Activated CD4-positive, alpha-beta memory T cell treated with anti-CD3 and anti-CD28 coated beads, Interleukin-2, amount 10 ng/mL, durations not matched to agents 7 days and 5 days (primary cell): ENCODE measurements at regions of chr17 and their contacts with region 1.

Region 1: GRCh38 chr17:48678141-48678971 is 44.0 kb downstream of the PRAC1 start:
- DNase-seq: peak; percentile 71
- H3K4me3 Mint-ChIP-seq: no peak overlapping the region
- H3K27ac Mint-ChIP-seq: no peak overlapping the region
- H3K4me1 Mint-ChIP-seq: no peaks in the 10 kb centered on the region
- H3K27me3 Mint-ChIP-seq: peaks cover 53% of the 10 kb centered on the region

Region 2: GRCh38 chr17:48663134-48663924 is 15.0 kb before region 1 on chr17:
- CTCF ChIA-PET with region 1: interaction called, 19 read pairs
- POLR2A ChIA-PET with region 1: no interaction called
- DNase-seq: no peak
- H3K4me3 Mint-ChIP-seq: no peak overlapping the region
- H3K27ac Mint-ChIP-seq: no peak overlapping the region
- H3K4me1 Mint-ChIP-seq: no peaks in the 10 kb centered on the region
- H3K27me3 Mint-ChIP-seq: peaks cover 29% of the 10 kb centered on the region

Region 3: DNA sequence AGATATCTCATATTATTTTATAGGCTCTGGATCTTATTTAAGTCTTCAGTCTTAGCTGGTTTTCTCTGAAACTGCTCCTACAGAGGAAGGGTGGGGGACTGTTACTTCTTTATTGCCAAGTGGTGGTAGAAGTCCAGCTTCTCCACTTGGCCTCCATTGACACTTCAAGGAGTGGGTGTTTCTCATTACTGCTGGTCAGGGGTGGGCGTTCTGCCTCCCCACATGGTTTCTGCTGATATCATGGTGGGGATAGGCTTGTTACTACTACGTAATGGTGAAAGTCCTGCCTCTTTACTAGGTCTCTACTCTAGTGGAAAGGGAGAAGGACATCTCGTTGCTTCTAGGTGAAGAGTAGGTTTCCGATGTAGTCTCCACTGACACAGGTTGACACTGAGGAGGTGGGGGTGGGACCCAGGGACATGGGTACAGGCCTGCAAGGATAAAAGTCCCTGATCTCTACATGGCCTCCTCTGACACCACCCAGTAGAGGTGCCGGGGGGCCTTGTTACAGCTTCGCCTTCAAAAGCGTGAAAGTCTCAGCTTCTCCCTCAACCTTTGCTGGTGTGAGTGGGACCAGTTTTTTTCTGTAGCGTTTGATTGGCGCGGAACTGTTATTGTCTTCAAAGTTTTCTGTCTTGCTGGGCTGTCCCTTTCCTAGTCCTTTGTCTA is 23.6 kb after region 1 on chr17:
- CTCF ChIA-PET with region 1: interaction called, 10 read pairs
- POLR2A ChIA-PET with region 1: no interaction called
- DNase-seq: no peak
- H3K4me3 Mint-ChIP-seq: no peak overlapping the region
- H3K27ac Mint-ChIP-seq: no peak overlapping the region
- H3K4me1 Mint-ChIP-seq: no peaks in the 10 kb centered on the region
- H3K27me3 Mint-ChIP-seq: peaks cover 49% of the 10 kb centered on the region

Region 4: DNA sequence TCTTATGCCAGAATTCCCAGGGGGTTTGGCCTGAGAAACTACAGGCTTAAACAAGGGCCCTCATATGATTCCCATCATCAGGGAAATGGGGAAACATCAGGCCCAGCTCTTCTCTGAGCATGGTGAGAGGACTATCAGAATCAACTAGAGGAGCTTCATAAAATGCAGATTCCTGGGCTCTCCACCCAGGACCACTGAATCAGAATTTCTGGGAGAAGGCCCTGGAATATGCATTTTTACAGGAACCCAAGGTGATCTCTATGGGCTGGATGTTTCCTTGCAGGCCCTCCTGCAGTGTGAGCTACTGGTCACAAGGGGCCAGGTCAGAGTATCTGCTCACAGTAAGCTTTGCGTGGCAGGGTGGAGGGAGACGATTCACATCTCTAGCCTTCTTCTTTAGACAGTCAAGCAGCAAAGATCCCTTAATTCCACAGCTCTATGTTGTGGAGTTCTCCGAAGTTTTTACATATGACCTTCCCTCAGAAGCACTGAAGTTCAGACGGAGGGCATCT is 89.0 kb after region 1 on chr17:
- CTCF ChIA-PET with region 1: interaction called, 13 read pairs
- POLR2A ChIA-PET with region 1: no interaction called
- DNase-seq: no peak
- H3K4me3 Mint-ChIP-seq: no peak overlapping the region
- H3K27ac Mint-ChIP-seq: no peak overlapping the region
- H3K4me1 Mint-ChIP-seq: peaks cover 4% of the 10 kb centered on the region
- H3K27me3 Mint-ChIP-seq: peaks cover 55% of the 10 kb centered on the region

Region 5: DNA sequence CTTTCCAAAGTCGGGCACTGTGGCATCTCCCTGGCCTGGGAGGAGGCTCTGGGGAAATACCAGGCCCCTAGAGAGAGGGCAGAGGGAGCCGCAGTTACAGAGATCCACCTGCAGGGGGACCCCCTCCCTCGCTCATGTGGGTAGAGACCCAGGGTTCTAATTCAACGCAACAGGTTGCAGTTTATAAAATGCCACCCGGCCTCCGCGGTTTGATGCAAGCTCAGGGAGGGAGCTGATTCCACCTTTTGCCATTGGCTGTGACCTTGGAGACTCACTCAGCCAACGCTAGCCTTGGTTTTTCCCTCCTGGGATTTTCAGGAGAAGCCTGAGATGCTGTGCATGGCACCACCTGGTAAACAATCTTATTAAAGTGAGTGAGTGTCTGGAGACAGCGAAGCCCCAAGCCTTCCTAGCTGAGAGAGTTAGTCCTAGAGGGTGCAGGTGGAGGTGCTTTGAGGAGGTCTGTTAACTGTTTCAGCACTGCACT is 126.6 kb after region 1 on chr17:
- CTCF ChIA-PET with region 1: interaction called, 11 read pairs
- POLR2A ChIA-PET with region 1: no interaction called
- DNase-seq: peak; percentile 73
- H3K4me3 Mint-ChIP-seq: no peak overlapping the region
- H3K27ac Mint-ChIP-seq: no peak overlapping the region
- H3K4me1 Mint-ChIP-seq: no peaks in the 10 kb centered on the region
- H3K27me3 Mint-ChIP-seq: peaks cover 36% of the 10 kb centered on the region